OCI-LY7 (cell line): ENCODE measurements at regions of chr7 and their contacts with region 1.

Region 1: GRCh38 chr7:113118074-113118959 is at the start of gene SMIM30:
- DNase-seq: peak; percentile 93
- H3K4me3 ChIP-seq: peak within 1 kb of the TSS; percentile 78
- H3K27ac ChIP-seq: peak within 1 kb of the TSS; percentile 48
- H3K4me1 ChIP-seq: peaks cover 49% of the 10 kb centered on the region
- CTCF ChIP-seq: no peak
- total RNA-seq, gene SMIM30: 45.5 and 55.1 TPM in 2 replicates

Region 2: GRCh38 chr7:112206238-112207044 is 911.9 kb before region 1 on chr7 and contains the starts of genes DOCK4 and ZNF277:
- CTCF ChIA-PET with region 1: no interaction called
- POLR2A ChIA-PET with region 1: no interaction called
- intact Hi-C with region 1: loop called (anchors 10 kb)
- DNase-seq: peak; percentile 99
- H3K4me3 ChIP-seq: peak within 1 kb of the TSS; percentile 95
- H3K27ac ChIP-seq: no peak within 1 kb of the TSS
- H3K4me1 ChIP-seq: peaks cover 21% of the 10 kb centered on the region
- CTCF ChIP-seq: no peak
- total RNA-seq, gene DOCK4: 1.9 and 4.9 TPM in 2 replicates
- total RNA-seq, gene ZNF277: 16.9 and 18.1 TPM in 2 replicates

Region 3: DNA sequence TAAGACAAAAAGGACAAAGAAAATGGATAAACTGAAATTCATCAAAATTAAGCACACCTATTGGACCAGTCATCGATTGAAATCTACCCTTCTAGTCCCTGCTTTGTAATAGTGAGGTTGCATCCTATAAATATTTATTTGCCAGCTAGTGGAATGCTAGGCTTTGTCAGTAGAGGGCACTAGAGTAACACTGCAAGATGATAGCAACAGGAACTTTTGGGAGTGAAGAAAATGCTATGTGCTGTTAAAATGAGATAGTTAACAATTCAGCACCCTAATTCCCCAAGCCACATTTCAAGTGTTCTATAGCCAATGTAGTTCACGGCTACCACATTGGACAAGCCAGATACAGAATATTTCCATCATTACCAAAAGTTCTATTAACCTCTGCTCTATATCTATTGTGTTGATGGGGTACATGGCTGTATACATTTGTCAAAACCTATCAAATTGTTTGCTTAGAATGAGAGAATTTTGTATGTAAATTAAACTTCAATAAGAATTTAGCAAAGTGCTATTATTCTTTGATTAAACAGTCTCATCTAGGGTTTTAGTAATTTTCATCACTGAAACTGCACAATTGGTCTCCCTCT is 567.8 kb before region 1 on chr7:
- CTCF ChIA-PET with region 1: no interaction called
- POLR2A ChIA-PET with region 1: no interaction called
- intact Hi-C with region 1: loop called (anchors 5 kb)
- DNase-seq: peak; percentile 71
- H3K4me3 ChIP-seq: no peak overlapping the region
- H3K27ac ChIP-seq: no peak overlapping the region
- H3K4me1 ChIP-seq: no peaks in the 10 kb centered on the region
- CTCF ChIP-seq: peak; percentile 99

Region 4: GRCh38 chr7:112939574-112940314 is 178.6 kb before region 1 on chr7:
- CTCF ChIA-PET with region 1: no interaction called
- POLR2A ChIA-PET with region 1: no interaction called
- intact Hi-C with region 1: loop called (anchors 5 kb)
- DNase-seq: peak; percentile 98
- H3K4me3 ChIP-seq: peak overlapping the region; percentile 83
- H3K27ac ChIP-seq: peak overlapping the region; percentile 57
- H3K4me1 ChIP-seq: peaks cover 24% of the 10 kb centered on the region
- CTCF ChIP-seq: no peak

Region 5: GRCh38 chr7:113137241-113137640 is 18.9 kb after region 1 on chr7:
- CTCF ChIA-PET with region 1: no interaction called
- POLR2A ChIA-PET with region 1: interaction called, 47 read pairs
- intact Hi-C with region 1: loop called (anchors 1 kb)
- DNase-seq: no peak
- H3K4me3 ChIP-seq: no peak overlapping the region
- H3K27ac ChIP-seq: no peak overlapping the region
- H3K4me1 ChIP-seq: peaks cover 21% of the 10 kb centered on the region
- CTCF ChIP-seq: no peak

Region 6: GRCh38 chr7:113142385-113143119 is 24.2 kb after region 1 on chr7:
- CTCF ChIA-PET with region 1: no interaction called
- POLR2A ChIA-PET with region 1: interaction called, 47 read pairs
- intact Hi-C with region 1: loop called (anchors 1 kb)
- DNase-seq: peak; percentile 85
- H3K4me3 ChIP-seq: peak overlapping the region; percentile 11
- H3K27ac ChIP-seq: peak overlapping the region; percentile 95
- H3K4me1 ChIP-seq: peaks cover 53% of the 10 kb centered on the region
- CTCF ChIP-seq: no peak